ENCODE measurements at regions of chr20 and their contacts with region 1.

Region 1: DNA sequence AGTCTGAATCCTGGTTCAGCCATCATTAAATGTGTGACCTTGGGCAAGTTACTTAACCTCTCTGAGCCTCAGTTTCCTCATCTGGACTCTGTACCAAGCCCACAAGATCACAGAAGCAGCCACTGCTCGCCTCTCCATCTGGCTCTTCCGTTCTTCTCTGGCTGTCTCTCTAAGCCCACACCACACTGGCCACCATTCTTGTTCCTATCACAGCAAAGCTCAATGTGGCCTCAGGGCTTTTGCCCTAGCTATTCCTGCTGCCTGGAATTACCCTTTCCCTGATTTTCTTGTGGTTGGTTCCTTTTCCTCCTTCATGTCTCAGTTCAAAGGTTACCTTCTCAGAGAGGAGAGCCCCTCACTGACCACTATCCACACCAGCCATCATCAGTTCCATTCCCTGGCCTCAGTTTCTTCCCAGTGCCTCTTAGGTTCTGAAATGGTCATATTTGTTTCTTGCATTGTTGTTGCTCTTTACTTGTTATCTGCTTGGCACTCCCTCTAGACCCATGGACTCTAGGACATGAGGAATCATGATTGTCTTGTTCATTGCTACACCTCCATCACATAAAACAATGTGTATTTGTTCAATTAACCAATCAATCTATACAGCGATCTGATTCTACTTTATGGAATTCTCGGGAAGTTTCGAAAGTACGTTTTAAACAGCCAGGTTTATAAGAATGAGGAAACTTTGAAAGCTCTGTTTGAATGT is 56.5 kb upstream of the PTPN1 start:
- DNase-seq: no peak
- ATAC-seq: no peak
- H3K4me3 ChIP-seq: no peak overlapping the region
- H3K27ac ChIP-seq: peak overlapping the region in 1 of 4 donors; percentile 23
- H3K4me1 ChIP-seq: peaks cover 10 to 16% of the 10 kb centered on the region in 2 donors
- H3K27me3 ChIP-seq: no peaks in the 10 kb centered on the region
- CTCF ChIP-seq: no peak
- POLR2A ChIP-seq: no peak

Region 2: DNA sequence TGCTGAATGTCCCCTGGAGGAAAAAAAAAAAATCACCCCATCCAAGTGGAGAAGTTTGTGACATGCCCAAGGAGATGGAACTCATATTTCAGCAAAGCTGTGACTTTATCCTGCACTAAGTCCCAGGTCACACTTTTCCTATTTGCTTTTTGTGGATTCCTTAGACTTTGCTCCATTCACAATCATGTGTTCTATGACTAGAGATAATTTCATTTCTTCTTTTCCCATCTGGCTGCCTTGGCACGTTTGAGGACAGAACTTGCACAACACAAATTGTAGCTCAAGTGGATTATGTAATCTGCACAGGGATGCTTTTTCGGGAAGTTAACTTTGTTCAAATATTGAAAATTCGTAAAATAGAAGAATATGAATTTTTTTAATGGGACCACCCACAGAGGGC is 44.2 kb before region 1 on chr20:
- in situ Hi-C with region 1: loop called in 1 of 4 experiments (anchors 5 kb)
- intact Hi-C with region 1: loop called (anchors 2 kb)
- DNase-seq: peak in 1 of 2 donors; percentile 59
- ATAC-seq: peak; percentile 32 to 58
- H3K4me3 ChIP-seq: no peak overlapping the region
- H3K27ac ChIP-seq: peak overlapping the region; percentile 61 to 100 (median 83)
- H3K4me1 ChIP-seq: peaks cover 61 to 64% of the 10 kb centered on the region in 2 donors
- H3K27me3 ChIP-seq: no peaks in the 10 kb centered on the region
- CTCF ChIP-seq: no peak
- POLR2A ChIP-seq: no peak